Astrocyte of the cerebellum (primary cell): ENCODE measurements at regions of chr10 and their contacts with region 1.

Region 1: DNA sequence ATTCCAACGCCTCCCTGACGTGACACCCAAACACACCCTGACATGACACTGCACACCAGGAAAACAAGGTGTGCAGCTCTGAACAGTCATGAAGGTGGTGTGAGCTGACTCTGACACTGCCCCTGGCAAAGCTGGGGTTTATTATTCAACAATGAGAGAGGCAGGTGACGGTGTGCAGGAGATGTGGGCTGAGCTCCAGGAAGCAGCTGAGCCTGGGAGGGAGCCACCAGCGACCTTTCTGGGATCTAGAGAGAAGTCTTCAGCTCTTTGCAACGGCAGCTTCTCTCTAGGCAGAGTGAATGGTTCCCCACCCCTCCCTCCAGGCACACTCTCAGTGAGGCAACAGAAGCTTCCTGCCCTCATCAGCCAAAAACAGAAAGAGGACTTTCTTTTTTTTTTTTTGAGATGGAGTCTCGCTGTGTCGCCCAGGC is 65.6 kb downstream of the SH3PXD2A start:
- DNase-seq: no peak
- H3K4me3 ChIP-seq: no peak overlapping the region
- CTCF ChIP-seq: no peak

Region 2: DNA sequence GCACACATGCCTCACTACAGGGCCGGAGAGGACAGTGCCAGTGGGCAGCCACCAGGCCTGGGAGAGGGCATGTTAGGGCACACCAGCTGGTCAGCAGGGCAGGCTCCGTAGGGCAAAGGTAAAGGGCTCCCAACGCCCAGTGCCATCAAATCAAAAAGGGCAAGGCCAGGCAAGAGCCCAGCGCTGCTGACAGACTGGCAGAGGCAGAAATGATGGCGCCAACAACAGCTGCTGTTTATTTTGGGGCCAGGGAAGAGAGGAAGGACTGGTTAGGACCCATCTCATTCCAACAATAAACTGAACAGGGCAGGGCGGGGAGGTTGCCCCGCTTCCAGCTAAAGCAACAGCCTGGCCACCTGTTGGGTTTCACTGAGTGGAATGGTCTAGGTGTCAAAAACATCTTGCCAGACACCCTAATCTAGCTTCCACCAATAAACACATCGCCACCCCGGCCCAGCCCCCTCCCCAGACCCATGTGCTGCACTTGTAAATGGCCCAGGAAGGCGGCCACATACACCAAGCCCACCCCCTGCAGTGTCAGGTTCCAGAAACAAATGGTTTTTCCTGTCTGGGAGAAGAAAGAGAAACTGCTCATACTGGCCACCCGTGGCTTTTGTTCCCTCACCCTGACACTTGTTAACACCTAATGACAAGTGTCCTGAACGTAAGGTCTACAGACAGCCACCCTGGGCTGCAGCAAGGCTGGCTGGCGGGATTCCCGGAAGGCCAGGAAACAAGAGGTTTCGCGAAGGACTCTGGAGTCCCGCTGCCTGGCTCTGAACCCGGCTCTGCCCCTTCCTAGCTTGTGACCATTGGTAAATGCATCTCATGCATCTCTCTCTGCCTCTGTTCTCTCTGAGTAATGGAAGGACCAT is 50.3 kb after region 1 on chr10:
- in situ Hi-C with region 1: loop called (anchors 5 kb)
- DNase-seq: no peak
- H3K4me3 ChIP-seq: no peak overlapping the region
- CTCF ChIP-seq: no peak

Region 3: GRCh38 chr10:103918053-103918846 is 128.5 kb after region 1 on chr10 and contains the start of gene STN1:
- in situ Hi-C with region 1: no loop called
- DNase-seq: peak; percentile 87
- H3K4me3 ChIP-seq: peak within 1 kb of the TSS; percentile 63
- CTCF ChIP-seq: peak; percentile 2